AG04450 (cell line): ENCODE measurements at regions of chr1 and their contacts with region 1.

Region 1: GRCh38 chr1:209627732-209628196 is 24.5 kb downstream of the LAMB3 start:
- DNase-seq: no peak
- H3K4me3 ChIP-seq: no peak overlapping the region
- H3K27ac ChIP-seq: no peak overlapping the region
- H3K27me3 ChIP-seq: no peaks in the 10 kb centered on the region
- CTCF ChIP-seq: peak; percentile 97

Region 2: DNA sequence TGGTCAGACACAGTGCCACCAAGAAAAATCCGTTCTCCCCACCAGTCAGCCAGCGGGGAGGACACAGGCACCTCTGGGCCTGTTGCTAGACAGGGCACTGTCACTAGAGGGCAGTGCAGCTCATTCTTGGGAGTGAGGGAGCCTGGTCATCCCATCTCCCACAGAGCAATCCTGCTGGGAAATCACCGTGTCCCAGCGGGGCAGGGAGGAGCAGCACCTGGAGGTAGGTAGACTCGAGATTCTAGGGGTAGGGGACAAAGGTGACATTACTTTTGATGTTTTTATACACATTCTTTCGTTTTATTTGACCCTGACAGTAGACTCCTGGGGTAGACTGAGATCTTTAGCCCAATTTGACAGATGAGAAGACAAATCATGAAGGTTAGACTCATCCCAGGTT is 51.0 kb before region 1 on chr1:
- CTCF ChIA-PET with region 1: interaction called, 21 read pairs
- POLR2A ChIA-PET with region 1: no interaction called
- DNase-seq: peak; percentile 39
- H3K4me3 ChIP-seq: no peak overlapping the region
- H3K27ac ChIP-seq: no peak overlapping the region
- H3K27me3 ChIP-seq: peaks cover 15% of the 10 kb centered on the region
- CTCF ChIP-seq: peak; percentile 97

Region 3: DNA sequence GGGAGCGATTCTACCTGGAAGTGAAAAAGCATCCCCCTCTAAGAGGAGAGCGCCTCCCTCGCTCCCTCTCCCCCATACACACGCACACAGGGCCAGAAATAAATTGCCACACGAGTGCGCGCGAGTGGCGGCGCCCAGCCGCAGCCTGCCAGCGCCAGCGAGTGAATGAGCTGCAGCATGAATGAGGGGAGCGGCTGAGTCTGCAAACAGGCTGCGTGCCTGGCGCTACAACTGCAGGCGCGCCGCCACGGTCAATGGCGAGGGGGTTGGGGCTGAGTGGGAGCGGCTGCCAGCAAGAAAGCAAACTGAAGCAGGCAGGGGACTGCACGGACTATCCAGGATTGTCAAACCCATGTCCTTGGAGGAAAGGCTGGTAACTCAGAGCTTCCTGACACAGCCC is 42.1 kb before region 1 on chr1:
- CTCF ChIA-PET with region 1: interaction called, 16 read pairs
- POLR2A ChIA-PET with region 1: no interaction called
- DNase-seq: no peak
- H3K4me3 ChIP-seq: peak overlapping the region; percentile 42
- H3K27ac ChIP-seq: no peak overlapping the region
- H3K27me3 ChIP-seq: peaks cover 2% of the 10 kb centered on the region
- CTCF ChIP-seq: no peak

Region 4: DNA sequence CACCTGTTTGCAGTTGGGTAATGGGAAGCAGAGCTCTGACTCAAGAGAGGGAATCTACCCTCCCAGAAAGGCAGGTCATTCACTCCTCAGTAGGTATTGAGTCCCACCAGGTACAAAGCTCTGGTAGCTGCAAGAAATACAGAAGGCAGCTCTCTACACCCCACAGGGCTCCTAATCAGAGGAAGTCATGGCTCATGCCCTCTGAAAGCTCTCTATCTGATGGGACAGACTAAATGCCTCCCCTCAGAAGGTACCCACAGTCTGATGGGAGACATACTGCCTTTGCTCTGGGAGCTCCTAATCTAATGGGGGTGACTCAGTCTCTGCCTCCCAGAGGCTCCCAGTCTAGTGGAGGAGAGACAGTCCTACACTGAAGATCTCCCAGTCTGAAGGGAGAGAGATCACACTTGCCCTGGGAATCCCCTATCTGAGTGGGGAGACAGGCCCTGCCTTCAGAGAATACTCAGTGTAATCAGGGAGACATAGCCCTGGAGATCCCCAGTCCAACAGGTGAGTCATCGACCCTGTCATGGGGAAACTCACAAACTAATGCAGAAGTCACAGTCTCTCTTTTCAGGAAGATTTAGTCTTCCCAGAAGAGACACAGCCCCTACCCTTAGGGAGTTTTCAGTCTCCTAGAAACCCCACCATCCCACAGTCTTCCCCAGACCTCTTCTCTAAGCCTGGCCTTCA is 20.5 kb before region 1 on chr1:
- CTCF ChIA-PET with region 1: interaction called, 19 read pairs
- POLR2A ChIA-PET with region 1: no interaction called
- DNase-seq: no peak
- H3K4me3 ChIP-seq: no peak overlapping the region
- H3K27ac ChIP-seq: no peak overlapping the region
- H3K27me3 ChIP-seq: no peaks in the 10 kb centered on the region
- CTCF ChIP-seq: no peak

Region 5: DNA sequence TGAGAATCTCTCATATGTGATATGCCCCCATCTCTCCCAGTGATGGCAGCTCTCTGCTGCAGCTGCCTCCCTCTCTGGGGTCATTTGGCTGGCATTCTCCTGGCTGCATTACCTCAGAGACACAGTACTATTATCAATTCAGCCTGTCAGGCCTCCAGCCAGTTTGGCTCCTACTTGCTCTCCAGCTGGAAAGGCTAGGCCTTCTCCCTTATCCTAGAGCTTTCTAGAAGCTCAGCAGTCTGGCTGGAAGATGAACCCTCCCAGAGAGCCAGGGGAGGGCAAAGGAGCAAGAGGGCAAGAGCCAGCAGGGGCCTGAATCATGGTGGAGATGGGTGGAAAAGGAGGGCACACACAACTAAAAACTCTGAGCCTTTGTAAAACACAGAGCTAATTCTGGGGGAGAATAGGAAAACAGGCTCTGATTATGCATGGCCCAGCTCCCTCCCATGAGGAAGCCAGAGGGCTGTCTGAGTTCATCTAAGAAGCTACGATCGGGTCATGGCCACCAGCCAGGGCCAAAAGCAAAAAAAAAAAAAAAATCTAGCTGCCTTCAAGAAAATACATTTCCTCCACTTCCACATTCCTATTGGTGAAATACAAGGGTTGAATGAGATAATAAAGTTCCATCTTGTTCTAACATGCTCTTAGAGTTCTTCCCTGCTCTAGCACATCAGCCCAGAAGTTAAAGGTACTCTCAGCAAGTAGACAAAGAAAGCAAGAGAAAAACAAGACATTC is 15.7 kb after region 1 on chr1:
- CTCF ChIA-PET with region 1: interaction called, 16 read pairs
- POLR2A ChIA-PET with region 1: no interaction called
- DNase-seq: no peak
- H3K4me3 ChIP-seq: no peak overlapping the region
- H3K27ac ChIP-seq: peak overlapping the region; percentile 21
- H3K27me3 ChIP-seq: no peaks in the 10 kb centered on the region
- CTCF ChIP-seq: no peak

Region 6: GRCh38 chr1:209651148-209651547 is 23.4 kb after region 1 on chr1:
- CTCF ChIA-PET with region 1: interaction called, 15 read pairs
- POLR2A ChIA-PET with region 1: no interaction called
- DNase-seq: no peak
- H3K4me3 ChIP-seq: no peak overlapping the region
- H3K27ac ChIP-seq: peak overlapping the region; percentile 52
- H3K27me3 ChIP-seq: no peaks in the 10 kb centered on the region
- CTCF ChIP-seq: no peak

Region 7: DNA sequence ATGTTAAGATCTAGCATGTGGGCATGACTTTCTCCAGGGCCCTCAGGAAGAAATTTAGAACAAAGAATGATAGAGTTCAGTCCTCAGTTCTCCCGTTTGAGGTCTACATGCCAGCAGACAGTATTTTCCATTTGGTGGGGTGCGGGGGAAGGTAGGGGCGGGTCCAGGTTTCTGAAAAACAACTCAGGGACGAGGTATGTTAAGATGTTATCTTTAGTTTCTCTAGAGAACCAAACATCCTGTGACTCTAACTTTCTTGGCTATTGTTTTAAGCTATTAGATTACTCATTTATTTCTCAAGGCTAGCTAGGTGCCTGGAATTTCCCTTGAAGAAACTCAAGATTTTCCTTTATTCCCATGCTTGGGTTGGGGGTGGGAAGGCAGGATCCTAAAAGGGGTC is 267.9 kb after region 1 on chr1:
- CTCF ChIA-PET with region 1: no interaction called
- POLR2A ChIA-PET with region 1: no interaction called
- DNase-seq: no peak
- H3K4me3 ChIP-seq: no peak overlapping the region
- H3K27ac ChIP-seq: peak overlapping the region; percentile 50
- H3K27me3 ChIP-seq: no peaks in the 10 kb centered on the region
- CTCF ChIP-seq: no peak